Calu3 (cell line): ENCODE measurements at regions of chr3 and their contacts with region 1.

Region 1: GRCh38 chr3:178325330-178325729 is 210.9 kb upstream of the KCNMB2 start:
- DNase-seq: no peak
- H3K4me3 Mint-ChIP-seq: no peak overlapping the region
- H3K27ac Mint-ChIP-seq: no peak overlapping the region
- H3K4me1 Mint-ChIP-seq: no peaks in the 10 kb centered on the region
- H3K27me3 Mint-ChIP-seq: no peaks in the 10 kb centered on the region
- CTCF ChIP-seq: no peak

Region 2: GRCh38 chr3:176872771-176873209 is 1452.5 kb before region 1 on chr3:
- CTCF ChIA-PET with region 1: no interaction called
- intact Hi-C with region 1: loop called (anchors 5 kb)
- DNase-seq: peak; percentile 73
- H3K4me3 Mint-ChIP-seq: no peak overlapping the region
- H3K27ac Mint-ChIP-seq: no peak overlapping the region
- H3K4me1 Mint-ChIP-seq: peaks cover 17% of the 10 kb centered on the region
- H3K27me3 Mint-ChIP-seq: no peaks in the 10 kb centered on the region
- CTCF ChIP-seq: peak; percentile 94

Region 3: DNA sequence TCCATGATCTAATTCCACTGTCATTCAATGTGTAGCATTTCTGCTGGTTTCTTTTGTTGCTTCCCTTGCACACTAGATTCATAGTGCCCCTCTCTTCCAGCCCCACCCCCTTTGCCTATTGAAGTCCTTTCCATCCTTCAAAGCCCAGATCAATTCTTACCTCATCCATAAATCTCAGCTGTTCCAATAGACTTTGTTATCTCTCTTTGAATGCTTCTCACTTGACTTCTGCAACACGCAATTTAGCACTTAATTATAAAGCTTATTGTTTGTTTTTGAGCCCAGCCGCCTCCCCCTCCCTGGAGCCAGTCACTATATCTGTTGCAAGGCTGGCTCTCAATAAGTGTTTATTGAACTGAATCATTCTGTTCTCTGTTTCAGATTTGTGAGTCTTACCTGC is 953.4 kb before region 1 on chr3:
- CTCF ChIA-PET with region 1: interaction called, 15 read pairs
- intact Hi-C with region 1: loop called (anchors 10 kb)
- DNase-seq: no peak
- H3K4me3 Mint-ChIP-seq: no peak overlapping the region
- H3K27ac Mint-ChIP-seq: no peak overlapping the region
- H3K4me1 Mint-ChIP-seq: peaks cover 3% of the 10 kb centered on the region
- H3K27me3 Mint-ChIP-seq: no peaks in the 10 kb centered on the region
- CTCF ChIP-seq: no peak

Region 4: DNA sequence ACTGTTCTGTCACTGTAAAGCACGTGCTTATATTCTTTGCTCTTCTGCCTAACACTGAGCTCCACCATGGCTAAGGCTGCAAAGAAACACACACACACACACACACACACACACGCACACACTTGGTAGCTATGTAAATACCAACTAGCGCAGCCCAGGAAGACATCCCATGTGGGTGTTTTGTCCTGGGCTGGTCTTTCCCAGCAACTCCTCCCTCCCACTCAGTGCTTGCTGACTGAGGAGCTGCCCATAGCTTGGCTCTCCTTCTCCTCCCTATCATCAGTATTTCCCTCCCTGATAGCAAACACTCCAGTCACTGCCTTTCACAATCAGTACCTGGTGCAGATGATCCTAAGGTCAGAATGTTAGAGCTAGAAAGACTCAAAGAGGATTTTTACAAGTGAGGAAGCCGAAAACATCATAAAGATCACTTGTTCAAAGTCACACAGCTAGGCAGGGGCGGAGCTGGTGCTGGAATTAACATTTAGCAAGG is 751.0 kb before region 1 on chr3:
- CTCF ChIA-PET with region 1: no interaction called
- intact Hi-C with region 1: no loop called
- DNase-seq: peak; percentile 50
- H3K4me3 Mint-ChIP-seq: no peak overlapping the region
- H3K27ac Mint-ChIP-seq: no peak overlapping the region
- H3K4me1 Mint-ChIP-seq: peaks cover 14% of the 10 kb centered on the region
- H3K27me3 Mint-ChIP-seq: no peaks in the 10 kb centered on the region
- CTCF ChIP-seq: no peak

Region 5: GRCh38 chr3:177816667-177817208 is 508.6 kb before region 1 on chr3:
- CTCF ChIA-PET with region 1: no interaction called
- intact Hi-C with region 1: loop called (anchors 10 kb)
- DNase-seq: peak; percentile 74
- H3K4me3 Mint-ChIP-seq: peak overlapping the region; percentile 28
- H3K27ac Mint-ChIP-seq: peak overlapping the region; percentile 82
- H3K4me1 Mint-ChIP-seq: peaks cover 61% of the 10 kb centered on the region
- H3K27me3 Mint-ChIP-seq: no peaks in the 10 kb centered on the region
- CTCF ChIP-seq: no peak

Region 6: GRCh38 chr3:178084938-178085816 is 240.2 kb before region 1 on chr3:
- CTCF ChIA-PET with region 1: no interaction called
- intact Hi-C with region 1: loop called (anchors 5 kb)
- DNase-seq: no peak
- H3K4me3 Mint-ChIP-seq: no peak overlapping the region
- H3K27ac Mint-ChIP-seq: no peak overlapping the region
- H3K4me1 Mint-ChIP-seq: peaks cover 7% of the 10 kb centered on the region
- H3K27me3 Mint-ChIP-seq: no peaks in the 10 kb centered on the region
- CTCF ChIP-seq: no peak

Region 7: GRCh38 chr3:178223876-178224275 is 101.5 kb before region 1 on chr3:
- CTCF ChIA-PET with region 1: no interaction called
- intact Hi-C with region 1: no loop called
- DNase-seq: no peak
- H3K4me3 Mint-ChIP-seq: no peak overlapping the region
- H3K27ac Mint-ChIP-seq: no peak overlapping the region
- H3K4me1 Mint-ChIP-seq: no peaks in the 10 kb centered on the region
- H3K27me3 Mint-ChIP-seq: no peaks in the 10 kb centered on the region
- CTCF ChIP-seq: no peak